ENCODE measurements at regions of chr15 and their contacts with region 1.

Region 1: DNA sequence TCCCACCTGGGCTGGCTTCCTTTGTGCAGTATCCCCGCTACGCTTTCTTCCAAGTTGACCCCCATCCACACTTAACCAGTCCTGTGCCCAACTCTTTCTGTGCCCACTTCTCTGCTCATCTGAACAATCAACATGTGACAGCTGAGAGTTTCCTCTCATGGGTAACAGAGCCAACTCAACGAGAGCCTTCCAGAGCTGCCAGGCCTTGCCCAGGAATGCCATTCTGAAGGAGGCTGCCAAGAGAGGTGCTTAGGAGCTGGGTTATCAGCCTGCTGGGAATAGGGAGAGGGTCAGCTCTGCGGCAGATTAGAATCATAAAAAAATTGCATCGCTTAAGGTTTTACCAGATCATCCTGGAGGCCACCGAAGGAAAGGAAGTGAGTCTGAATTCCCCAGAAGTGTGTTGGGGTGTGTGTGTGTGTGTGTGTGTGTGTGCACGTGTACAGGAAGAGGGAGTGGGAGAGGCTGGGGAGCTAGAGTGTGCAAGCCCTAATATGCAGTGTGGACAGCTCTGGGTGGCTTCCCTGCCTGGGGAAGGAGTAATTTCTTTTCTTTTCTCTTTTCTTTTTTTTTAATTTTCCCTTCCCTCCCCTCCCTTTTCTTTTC is 66.7 kb downstream of the ITGA11 start:
- H3K4me3 Mint-ChIP-seq: peak overlapping the region; percentile 75
- H3K27ac Mint-ChIP-seq: no peak overlapping the region
- H3K4me1 Mint-ChIP-seq: peaks cover 49% of the 10 kb centered on the region
- H3K27me3 Mint-ChIP-seq: peaks cover 8% of the 10 kb centered on the region

Region 2: DNA sequence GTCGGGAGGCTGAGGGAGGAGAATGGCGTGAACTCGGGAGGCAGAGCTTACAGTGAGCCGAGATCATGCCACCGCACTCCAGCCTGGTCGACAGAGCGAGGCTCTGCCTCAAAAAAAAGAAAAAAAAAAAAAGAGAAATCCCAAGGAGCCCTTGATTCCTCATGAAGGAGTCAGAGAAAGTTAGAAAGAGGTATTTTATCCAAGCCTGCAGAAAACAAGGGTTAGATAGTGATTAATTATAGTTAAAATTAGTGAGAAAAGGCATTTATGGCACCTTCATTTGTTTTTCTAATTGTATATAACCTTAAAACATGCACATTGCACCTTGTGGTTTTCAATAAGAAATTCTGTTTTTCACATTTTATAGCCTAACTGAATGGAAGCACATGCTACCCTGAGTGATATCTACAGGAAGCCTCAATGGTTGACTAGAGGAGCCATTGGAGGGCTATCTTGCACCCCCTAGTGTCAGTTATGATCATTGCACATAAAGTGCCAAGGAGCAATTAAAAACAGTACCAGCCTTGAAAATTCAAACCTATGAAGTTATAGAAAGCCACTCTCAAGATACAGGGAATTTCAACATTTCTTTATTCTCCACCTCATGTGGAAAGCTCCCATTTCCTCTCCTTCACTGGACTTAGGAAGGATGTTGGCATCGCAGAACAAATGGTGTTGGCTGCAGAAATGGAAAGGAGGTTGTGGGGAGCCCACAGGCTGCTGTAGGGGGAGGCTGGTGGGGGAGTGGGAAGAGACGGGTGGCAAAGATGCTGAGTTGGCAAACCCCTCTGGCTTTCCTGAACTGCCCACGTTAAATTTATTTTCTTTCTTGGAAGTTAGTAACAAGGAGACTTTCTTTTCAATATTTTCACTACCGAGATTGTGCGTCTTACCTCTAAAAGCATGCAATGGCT is 18.2 kb after region 1 on chr15:
- intact Hi-C with region 1: loop called (anchors 2 kb)
- H3K4me3 Mint-ChIP-seq: no peak overlapping the region
- H3K27ac Mint-ChIP-seq: no peak overlapping the region
- H3K4me1 Mint-ChIP-seq: peaks cover 14% of the 10 kb centered on the region
- H3K27me3 Mint-ChIP-seq: peaks cover 3% of the 10 kb centered on the region

Region 3: DNA sequence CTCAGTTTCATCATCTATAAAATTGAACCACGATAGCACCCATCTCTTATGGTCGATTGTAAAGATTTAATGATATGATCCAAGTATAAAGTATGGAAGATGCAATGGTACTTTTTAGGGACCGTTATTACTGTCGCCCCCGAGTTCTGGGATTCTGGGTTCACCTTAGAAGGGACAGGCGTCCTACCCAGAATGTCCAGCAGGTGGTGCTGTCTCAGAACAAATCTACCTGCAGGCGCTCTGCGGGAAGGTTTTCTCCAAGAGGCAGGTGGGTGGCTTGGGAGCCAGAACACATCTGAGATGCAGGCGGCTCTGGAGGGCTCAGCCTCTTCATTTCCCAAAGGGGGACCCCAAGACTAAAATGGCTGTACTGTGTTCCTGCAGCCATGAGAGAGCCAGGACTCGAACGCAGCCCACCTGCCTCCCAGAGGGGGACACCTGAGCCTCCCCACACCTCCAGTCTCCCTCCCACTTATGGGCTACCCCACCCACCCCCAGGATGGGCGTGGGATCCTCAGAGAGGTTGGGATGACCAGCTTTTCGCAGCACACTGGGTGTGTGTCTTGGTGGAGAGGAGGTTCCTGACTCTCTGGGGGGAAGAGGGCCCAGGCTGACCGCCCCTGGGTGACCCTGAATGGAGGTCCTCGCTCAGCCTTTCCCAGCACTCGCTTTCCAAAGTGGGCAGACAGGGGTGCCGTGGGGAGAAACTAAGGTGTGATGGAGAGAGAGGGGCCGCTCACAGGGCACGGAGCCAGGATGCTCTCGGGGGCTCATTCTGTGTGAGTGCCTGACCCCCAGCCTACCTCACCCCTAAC is 185.4 kb after region 1 on chr15:
- intact Hi-C with region 1: no loop called
- H3K4me3 Mint-ChIP-seq: no peak overlapping the region
- H3K27ac Mint-ChIP-seq: no peak overlapping the region
- H3K4me1 Mint-ChIP-seq: no peaks in the 10 kb centered on the region
- H3K27me3 Mint-ChIP-seq: peaks cover 17% of the 10 kb centered on the region

Measured in dendritic cell treated with granulocyte-macrophage colony-stimulating factor and Interleukin-4, amounts not matched to agents 40 ng/mL and 50 ng/mL, for 4 days (primary cell).